Heart right ventricle (tissue), 16 donors: ENCODE measurements at regions of chr6 and their contacts with region 1.

Region 1: DNA sequence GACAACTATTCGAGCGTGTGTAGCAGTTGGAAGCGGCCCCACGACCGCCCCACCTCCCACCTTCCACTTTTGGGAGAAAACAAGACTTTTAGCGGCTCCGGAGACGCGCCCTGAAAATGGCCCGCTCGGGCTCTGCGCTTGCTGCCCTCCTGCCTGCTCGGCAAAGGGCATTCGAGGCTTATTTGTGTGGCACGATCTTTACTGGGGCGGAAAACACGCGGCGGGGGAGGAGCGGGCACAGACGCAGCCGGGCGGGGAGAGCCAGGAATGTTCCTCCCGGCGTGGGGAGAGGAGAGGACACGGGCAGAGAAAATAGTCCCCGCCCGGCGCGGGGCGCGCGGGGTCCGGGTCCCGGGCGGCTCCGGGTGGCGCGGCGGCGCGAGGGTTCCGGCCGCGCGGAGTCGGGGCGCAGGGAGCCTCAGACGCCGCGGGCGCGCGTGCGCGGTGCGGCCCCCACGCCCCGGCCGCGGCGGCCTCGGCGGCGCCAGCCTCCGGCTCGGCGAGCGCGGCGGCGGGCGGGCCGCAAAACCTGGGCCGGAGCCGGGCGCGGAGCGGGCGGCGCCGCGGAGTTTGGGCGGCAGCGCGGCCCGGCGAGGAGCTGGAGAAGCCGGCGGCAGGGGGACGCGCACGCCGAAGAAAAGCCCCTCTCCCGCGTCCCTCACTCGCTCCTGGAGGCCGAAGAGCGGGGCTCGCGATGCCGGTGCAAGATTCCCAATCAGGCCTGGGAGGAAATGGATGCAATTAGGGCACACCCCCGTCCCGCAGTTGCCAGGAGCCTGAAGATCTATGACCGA is 90.0 kb upstream of the ARID1B start:
- DNase-seq: peak; percentile 90 to 91
- ATAC-seq: peak; percentile 95 to 99 (median 96)
- H3K4me3 ChIP-seq: peak overlapping the region; percentile 59 to 94 (median 72)
- H3K27ac ChIP-seq: peak overlapping the region; percentile 87 to 100 (median 98)
- H3K4me1 ChIP-seq: peaks cover 0 to 19% (median 11%) of the 10 kb centered on the region in 9 donors
- H3K27me3 ChIP-seq: no peaks in the 10 kb centered on the region
- CTCF ChIP-seq: no peak

Region 2: DNA sequence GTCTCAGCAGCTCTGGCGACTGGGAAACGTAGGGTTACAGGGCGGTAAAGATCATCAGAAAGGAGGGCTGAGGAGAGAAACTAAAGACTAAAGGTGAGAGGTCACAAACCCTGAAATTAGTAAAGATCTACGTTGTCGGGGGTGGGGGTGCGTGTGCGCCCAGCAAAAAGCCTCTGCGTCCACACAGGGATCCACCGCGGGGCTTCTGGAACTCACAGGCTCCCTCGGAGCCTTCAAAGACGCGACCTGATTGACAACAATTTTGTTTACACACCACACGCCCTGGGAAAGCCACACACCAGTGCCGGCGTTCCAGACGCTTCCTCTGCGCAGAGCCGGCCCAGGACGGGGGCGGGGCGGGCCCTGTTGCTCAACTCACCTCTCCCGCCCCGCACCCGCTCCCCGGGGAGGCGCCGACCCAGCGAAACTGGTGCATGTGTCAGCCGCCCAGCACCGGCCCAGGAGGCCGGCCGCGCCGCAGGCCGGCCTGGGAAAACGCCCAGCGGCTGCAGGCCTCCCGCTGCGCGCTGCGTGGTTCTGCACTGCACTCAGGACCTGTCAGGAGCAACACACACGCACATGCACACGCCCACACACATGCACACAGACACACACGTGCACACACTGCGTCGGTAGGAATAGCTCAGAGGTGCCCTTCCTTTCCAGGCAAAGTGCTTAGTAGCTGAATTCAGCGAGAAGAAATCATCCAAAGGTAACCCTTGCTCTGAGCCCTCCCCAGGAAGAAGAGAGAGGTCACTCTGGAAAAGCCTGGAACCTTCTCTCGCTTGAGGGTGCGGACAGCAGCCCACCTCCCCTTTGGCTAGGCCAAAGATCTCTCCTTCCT is 32.8 kb after region 1 on chr6:
- intact Hi-C with region 1: loop called in 4 of 10 experiments (anchors 1 to 2 kb)
- DNase-seq: peak; percentile 93 to 97
- ATAC-seq: peak; percentile 98 to 100 (median 98)
- H3K4me3 ChIP-seq: peak overlapping the region in 9 of 10 donors; percentile 21 to 61 (median 46)
- H3K27ac ChIP-seq: peak overlapping the region; percentile 80 to 96 (median 88)
- H3K4me1 ChIP-seq: peaks cover 11 to 30% (median 26%) of the 10 kb centered on the region in 9 donors
- H3K27me3 ChIP-seq: no peaks in the 10 kb centered on the region
- CTCF ChIP-seq: no peak

Region 3: DNA sequence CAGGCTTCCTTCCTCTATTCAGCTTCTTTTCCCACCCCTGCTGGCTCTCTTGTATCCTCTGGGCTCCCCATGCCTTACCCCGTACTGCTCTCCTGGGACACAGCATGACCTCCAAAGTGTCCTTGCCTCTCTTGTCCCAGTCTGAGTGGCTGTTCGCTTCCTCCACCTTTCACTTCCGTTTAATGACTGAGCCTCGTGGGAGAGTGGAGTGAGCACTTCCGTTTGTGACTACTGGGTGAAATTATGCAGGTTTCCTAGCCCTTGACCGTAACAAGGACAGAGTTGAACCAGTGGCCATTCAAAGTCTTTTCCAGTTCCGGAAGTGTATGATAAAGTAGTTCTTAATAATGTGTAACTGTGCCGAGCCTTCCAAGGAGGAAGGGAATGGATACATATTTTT is 199.2 kb after region 1 on chr6:
- intact Hi-C with region 1: loop called in 1 of 10 experiments (anchors 10 kb)
- DNase-seq: peak in 1 of 2 donors; percentile 60
- ATAC-seq: peak; percentile 48 to 82 (median 70)
- H3K4me3 ChIP-seq: no peak overlapping the region
- H3K27ac ChIP-seq: peak overlapping the region in 8 of 10 donors; percentile 23 to 72 (median 53)
- H3K4me1 ChIP-seq: peaks cover 4 to 100% (median 82%) of the 10 kb centered on the region in 9 donors
- H3K27me3 ChIP-seq: no peaks in the 10 kb centered on the region
- CTCF ChIP-seq: no peak

Region 4: DNA sequence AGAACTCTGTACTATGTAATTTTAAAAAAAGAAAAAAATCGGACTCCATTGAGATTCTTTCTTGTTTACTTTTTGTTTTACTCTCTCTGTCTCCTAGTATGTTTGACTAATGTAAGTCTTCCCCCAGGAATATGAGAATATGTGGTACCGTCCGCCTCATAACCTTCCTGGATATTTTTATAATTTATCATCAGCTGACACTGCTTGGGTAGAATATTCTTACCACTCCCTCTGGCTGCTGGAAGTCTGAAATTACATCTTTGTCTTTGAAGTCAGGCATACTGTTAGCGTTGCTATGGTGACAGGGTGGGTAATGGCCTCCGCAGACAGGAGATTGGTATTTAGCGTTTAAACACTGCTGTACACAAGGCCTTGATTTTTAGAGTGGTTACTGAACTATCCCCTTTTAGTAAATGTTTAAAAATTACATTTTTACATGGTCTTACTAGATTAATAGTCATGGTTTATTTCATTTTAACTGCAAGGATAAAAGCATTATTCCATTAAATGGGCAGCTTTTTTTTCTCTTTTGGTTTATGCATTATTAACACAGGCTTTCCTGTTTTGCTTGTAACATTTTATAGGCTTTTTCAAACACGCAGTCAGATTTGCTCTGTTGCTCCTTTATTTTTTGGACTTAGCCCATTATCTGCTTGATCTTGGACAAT is 266.4 kb after region 1 on chr6:
- intact Hi-C with region 1: loop called in 5 of 10 experiments (anchors 2 to 10 kb)
- DNase-seq: peak in 1 of 2 donors; percentile 68
- ATAC-seq: peak; percentile 62 to 88 (median 79)
- H3K4me3 ChIP-seq: peak overlapping the region in 6 of 10 donors; percentile 6 to 23 (median 14)
- H3K27ac ChIP-seq: peak overlapping the region in 9 of 10 donors; percentile 8 to 75 (median 36)
- H3K4me1 ChIP-seq: peaks cover 15 to 97% (median 87%) of the 10 kb centered on the region in 9 donors
- H3K27me3 ChIP-seq: no peaks in the 10 kb centered on the region
- CTCF ChIP-seq: peak in 7 of 9 donors; percentile 38 to 71 (median 44)

Region 5: GRCh38 chr6:157021344-157021992 is 334.3 kb after region 1 on chr6:
- intact Hi-C with region 1: loop called in 5 of 10 experiments (anchors 2 to 10 kb)
- DNase-seq: peak; percentile 91 to 92
- ATAC-seq: peak; percentile 93 to 96 (median 94)
- H3K4me3 ChIP-seq: peak overlapping the region; percentile 59 to 88 (median 78)
- H3K27ac ChIP-seq: peak overlapping the region; percentile 94 to 100 (median 98)
- H3K4me1 ChIP-seq: peaks cover 0 to 63% (median 47%) of the 10 kb centered on the region in 9 donors
- H3K27me3 ChIP-seq: no peaks in the 10 kb centered on the region
- CTCF ChIP-seq: peak in 8 of 9 donors; percentile 29 to 71 (median 48)

Region 6: DNA sequence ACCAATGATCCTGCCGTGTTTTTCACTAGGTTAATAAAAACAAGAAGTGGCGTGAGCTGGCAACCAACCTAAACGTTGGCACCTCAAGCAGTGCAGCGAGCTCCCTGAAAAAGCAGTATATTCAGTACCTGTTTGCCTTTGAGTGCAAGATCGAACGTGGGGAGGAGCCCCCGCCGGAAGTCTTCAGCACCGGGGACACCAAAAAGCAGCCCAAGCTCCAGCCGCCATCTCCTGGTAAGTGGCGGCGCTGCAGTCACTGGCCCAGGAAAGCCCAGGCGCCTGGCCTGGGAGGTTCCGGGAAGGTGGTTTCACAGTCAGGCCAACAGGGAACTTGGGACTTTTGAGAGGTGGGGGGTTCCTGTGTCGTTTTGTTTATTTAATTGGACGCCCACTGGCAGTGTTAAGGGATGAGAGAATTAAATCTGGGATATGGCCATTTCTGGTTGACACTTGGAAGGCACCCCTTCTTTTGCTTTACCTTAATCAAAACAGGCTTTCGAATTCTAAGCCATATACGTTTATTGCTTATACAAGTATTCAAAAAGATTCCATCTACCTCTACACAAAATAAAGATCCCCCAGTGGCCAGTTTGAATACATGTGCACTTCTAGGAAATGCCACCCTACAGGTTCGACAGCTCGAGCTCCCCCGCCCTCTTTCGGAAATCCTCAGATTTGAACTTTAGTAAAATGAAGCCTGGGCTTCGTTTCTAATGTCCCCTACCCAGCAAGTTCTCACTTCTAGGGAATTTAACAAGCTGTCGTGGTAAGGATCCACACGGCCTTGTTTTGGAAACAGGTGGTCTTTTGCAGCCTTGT is 497.2 kb after region 1 on chr6:
- intact Hi-C with region 1: loop called in 1 of 10 experiments (anchors 2 kb)
- DNase-seq: peak; percentile 63 to 72
- ATAC-seq: peak; percentile 66 to 87 (median 76)
- H3K4me3 ChIP-seq: peak overlapping the region in 2 of 10 donors; percentile 20 to 23
- H3K27ac ChIP-seq: peak overlapping the region in 2 of 10 donors; percentile 5 to 24
- H3K4me1 ChIP-seq: peaks cover 0 to 42% (median 23%) of the 10 kb centered on the region in 9 donors
- H3K27me3 ChIP-seq: no peaks in the 10 kb centered on the region
- CTCF ChIP-seq: peak; percentile 77 to 93 (median 90)